Activated T-helper 2 cell treated with anti-CD3 and anti-CD28 coated beads, Interferon-gamma antibody, Interleukin-2, Interleukin-4, amounts not matched to agents 10 μg/mL and 5 μg/mL and 100 μg/mL, durations not matched to agents 14 hours and 24 hours and 36 hours (primary cell): ENCODE measurements at regions of chr15 and their contacts with region 1.

Region 1: DNA sequence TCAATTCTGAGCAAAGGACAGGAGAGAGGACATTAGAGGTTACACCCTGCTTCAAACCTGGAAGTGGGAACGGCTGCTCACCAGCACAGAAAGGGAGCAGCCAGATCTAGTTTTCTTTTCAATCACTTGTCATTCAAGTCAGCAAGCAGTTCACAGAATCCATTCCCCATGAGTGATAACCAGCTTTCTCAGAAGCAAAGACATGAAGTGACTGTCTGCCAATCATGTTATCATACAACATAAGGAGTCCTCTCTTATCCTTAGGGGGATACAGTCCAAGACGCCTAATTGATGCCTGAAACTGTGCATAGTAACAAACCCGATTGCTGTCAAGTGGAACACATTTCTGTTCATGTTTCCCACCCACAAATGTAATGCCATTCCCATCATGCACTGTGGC is 54.7 kb downstream of the FAM98B start:
- DNase-seq: no peak
- H3K4me3 Mint-ChIP-seq: no peak overlapping the region
- H3K27ac Mint-ChIP-seq: peak overlapping the region; percentile 73
- H3K4me1 Mint-ChIP-seq: peaks cover 40% of the 10 kb centered on the region
- H3K27me3 Mint-ChIP-seq: no peaks in the 10 kb centered on the region

Region 2: GRCh38 chr15:38187630-38188313 is 320.9 kb before region 1 on chr15:
- intact Hi-C with region 1: no loop called
- DNase-seq: no peak
- H3K4me3 Mint-ChIP-seq: no peak overlapping the region
- H3K27ac Mint-ChIP-seq: no peak overlapping the region
- H3K4me1 Mint-ChIP-seq: no peaks in the 10 kb centered on the region
- H3K27me3 Mint-ChIP-seq: peaks cover 2% of the 10 kb centered on the region

Region 3: DNA sequence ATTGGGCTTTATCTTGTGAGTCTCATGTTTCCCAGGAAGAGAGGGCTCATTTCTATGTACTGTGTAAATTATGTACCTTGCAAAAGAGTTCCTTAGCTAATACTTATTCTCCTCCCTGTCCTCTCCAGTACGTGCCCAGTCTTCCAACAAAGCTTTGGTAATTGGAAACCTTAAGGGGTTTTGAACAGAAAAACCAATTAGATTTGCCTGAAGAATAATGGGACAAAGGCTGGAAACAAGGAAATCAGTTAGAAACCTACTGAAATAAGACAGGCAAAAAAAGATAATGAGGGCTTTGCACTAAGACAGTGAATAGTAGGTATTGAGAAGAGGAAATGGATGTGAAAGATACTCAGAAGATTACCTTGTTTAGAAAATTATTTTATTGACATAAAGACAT is 173.5 kb before region 1 on chr15:
- intact Hi-C with region 1: no loop called
- DNase-seq: no peak
- H3K4me3 Mint-ChIP-seq: no peak overlapping the region
- H3K27ac Mint-ChIP-seq: no peak overlapping the region
- H3K4me1 Mint-ChIP-seq: no peaks in the 10 kb centered on the region
- H3K27me3 Mint-ChIP-seq: peaks cover 5% of the 10 kb centered on the region

Region 4: GRCh38 chr15:38414357-38414756 is 94.3 kb before region 1 on chr15:
- intact Hi-C with region 1: no loop called
- DNase-seq: no peak
- H3K4me3 Mint-ChIP-seq: no peak overlapping the region
- H3K27ac Mint-ChIP-seq: no peak overlapping the region
- H3K4me1 Mint-ChIP-seq: no peaks in the 10 kb centered on the region
- H3K27me3 Mint-ChIP-seq: peaks cover 40% of the 10 kb centered on the region

Region 5: DNA sequence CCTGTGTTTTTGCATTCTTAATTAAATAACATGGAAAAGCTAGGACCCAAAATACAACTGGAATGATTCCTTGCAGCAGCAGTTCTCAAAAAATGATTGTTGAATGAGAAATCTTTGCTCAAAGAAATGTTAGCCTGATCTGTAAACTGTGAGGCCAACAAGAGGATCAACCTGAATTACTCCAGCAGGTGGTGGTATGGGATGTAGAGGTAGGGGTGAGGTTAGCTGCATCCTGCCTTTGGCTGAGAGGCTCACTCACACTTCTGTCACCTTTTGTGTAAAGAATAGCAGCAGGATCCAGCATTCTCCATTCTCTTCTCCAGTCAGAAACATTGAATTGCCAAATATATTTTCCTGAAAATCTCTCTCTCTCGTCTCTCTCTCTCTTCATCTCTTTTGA is 81.3 kb before region 1 on chr15:
- intact Hi-C with region 1: no loop called
- DNase-seq: no peak
- H3K4me3 Mint-ChIP-seq: no peak overlapping the region
- H3K27ac Mint-ChIP-seq: no peak overlapping the region
- H3K4me1 Mint-ChIP-seq: peaks cover 10% of the 10 kb centered on the region
- H3K27me3 Mint-ChIP-seq: peaks cover 38% of the 10 kb centered on the region

Region 6: DNA sequence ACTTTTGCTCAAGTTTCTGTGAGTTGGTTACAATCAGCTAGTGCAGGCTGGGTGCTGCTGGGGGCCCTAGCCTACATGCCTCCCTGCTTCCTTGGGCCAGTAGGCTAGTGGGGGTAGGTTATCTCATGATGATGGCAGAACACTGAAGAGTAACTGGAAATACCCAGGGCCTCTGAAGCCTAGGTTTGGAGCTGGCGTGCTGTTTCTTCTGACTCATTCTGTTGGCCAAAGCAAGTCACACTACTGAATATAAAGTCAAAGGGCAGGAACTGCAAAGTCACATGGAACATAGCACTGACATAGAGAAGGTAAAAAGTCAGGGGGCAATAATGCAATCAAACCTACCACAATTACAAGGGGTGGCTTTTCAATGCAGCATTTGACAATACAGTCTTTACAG is 21.5 kb after region 1 on chr15:
- intact Hi-C with region 1: loop called (anchors 2 kb)
- DNase-seq: no peak
- H3K4me3 Mint-ChIP-seq: peak overlapping the region; percentile 23
- H3K27ac Mint-ChIP-seq: peak overlapping the region; percentile 82
- H3K4me1 Mint-ChIP-seq: peaks cover 86% of the 10 kb centered on the region
- H3K27me3 Mint-ChIP-seq: no peaks in the 10 kb centered on the region